T-cell (primary cell): ENCODE measurements at regions of chr17 and their contacts with region 1.

Region 1: GRCh38 chr17:74776044-74776977 is at the start of gene NAT9:
- DNase-seq: peak; percentile 93 to 100 (median 97)
- ATAC-seq: peak; percentile 77 to 87 (median 82)
- H3K4me3 ChIP-seq: peak within 1 kb of the TSS; percentile 70 to 75
- H3K4me3 Mint-ChIP-seq: peak within 1 kb of the TSS; percentile 96 to 99 (median 98)
- H3K27ac ChIP-seq: peak within 1 kb of the TSS; percentile 30
- H3K27ac Mint-ChIP-seq: peak within 1 kb of the TSS; percentile 97
- H3K4me1 ChIP-seq: peaks cover 25 to 70% of the 10 kb centered on the region in 2 experiments
- H3K4me1 Mint-ChIP-seq: peaks cover 50 to 72% (median 66%) of the 10 kb centered on the region in 3 donors
- H3K27me3 ChIP-seq: no peaks in the 10 kb centered on the region
- H3K27me3 Mint-ChIP-seq: no peaks in the 10 kb centered on the region
- total RNA-seq, gene NAT9: 37.2 to 74.4 (median 71.9) TPM

Region 2: DNA sequence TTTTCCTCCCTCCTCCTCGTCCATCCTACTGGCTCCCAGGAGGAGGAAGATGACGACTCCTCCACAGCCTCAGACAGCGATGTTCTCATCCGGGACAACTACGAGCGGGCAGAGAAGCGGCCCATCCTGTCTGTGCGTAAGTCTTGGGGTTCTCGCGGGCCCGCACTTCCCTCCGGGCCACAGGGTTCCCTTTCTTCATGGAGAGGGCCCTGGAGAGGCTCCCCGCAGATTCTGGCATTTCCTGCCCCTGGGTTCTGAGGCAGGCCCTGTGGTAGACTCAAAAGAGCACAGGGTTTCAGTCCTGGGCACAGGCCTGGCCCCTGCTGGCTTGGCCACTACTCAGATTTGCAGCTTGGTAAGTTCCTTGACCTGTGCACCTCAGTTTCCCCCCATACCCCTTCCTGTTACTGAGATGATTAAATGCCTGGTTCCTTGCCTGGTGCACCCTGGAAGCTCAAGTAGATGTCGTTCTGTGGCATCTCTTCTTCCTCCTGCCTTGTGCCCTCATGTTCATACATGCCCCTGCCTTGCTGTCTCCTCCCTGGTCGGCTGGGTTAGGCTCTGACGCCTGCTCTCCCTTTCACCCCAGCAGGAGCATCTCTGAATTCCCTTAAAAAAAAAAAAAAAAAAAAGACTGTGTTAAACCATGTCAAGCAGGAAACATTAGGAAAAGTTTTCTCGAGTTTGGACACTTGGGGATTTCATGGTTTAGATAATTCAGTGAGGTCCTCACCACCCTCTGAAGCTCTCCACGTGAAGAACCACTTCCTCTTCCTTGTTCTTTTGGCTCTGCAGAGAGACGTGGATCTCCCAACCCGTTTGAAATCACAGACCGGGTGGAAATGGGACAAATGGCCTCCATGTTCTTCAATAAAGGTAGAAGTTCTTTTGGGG is 14.1 kb after region 1 on chr17:
- CTCF ChIA-PET with region 1: interaction called in 1 of 2 experiments, 11 read pairs
- POLR2A ChIA-PET with region 1: no interaction called
- DNase-seq: peak in 1 of 35 experiments; percentile 23
- ATAC-seq: peak; percentile 35 to 54 (median 40)
- H3K4me3 ChIP-seq: no peak overlapping the region
- H3K4me3 Mint-ChIP-seq: peak overlapping the region in 2 of 3 donors; percentile 13 to 65
- H3K27ac ChIP-seq: no peak overlapping the region
- H3K27ac Mint-ChIP-seq: peak overlapping the region; percentile 81 to 84
- H3K4me1 ChIP-seq: peaks cover 24 to 40% of the 10 kb centered on the region in 2 experiments
- H3K4me1 Mint-ChIP-seq: peaks cover 31 to 44% (median 32%) of the 10 kb centered on the region in 3 donors
- H3K27me3 ChIP-seq: no peaks in the 10 kb centered on the region
- H3K27me3 Mint-ChIP-seq: no peaks in the 10 kb centered on the region

Region 3: DNA sequence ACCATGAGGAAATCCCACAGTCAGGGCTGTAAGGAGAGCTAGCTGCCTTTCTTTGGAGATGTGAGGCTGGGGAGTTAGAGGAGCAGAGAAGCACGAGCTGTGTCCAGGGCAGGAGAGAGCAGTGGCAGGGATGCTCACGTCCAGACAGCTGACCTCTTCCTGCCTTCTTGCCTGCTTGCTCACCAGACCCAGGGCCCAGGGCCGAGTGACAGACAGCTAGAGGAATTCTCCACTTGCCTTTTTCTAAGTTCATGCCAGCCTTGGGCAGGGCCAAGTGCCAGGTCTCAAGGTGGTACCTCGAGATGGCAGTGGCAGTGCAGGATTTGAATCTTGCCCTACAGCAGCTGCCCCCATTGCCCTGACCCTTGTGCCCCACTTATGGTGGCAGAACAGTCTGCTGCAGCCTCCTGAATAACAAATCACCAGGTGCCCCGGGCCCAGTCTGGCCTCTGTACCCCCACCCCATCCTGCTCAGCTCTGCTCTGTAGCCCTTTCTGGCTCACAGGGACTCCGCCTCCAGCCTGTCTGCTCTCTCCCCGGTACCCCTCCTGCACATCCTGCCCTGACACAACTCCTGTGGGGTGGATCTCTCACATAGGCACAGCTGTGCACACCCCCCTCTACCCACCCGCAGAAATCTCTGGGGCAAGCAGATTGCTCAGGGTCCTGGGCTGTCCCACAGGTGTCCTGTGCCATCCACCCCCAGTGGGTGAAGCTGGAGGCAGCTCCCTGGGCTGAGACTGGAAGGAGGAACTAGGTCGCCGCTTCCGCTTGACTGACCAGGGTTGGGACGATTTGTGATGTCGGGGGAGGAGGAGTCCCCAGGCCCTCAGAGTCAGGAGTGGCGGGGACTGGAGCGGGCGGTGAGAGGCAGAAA is 57.4 kb after region 1 on chr17:
- CTCF ChIA-PET with region 1: no interaction called
- POLR2A ChIA-PET with region 1: no interaction called
- DNase-seq: peak in 1 of 35 experiments; percentile 27
- ATAC-seq: no peak
- H3K4me3 ChIP-seq: no peak overlapping the region
- H3K4me3 Mint-ChIP-seq: no peak overlapping the region
- H3K27ac ChIP-seq: no peak overlapping the region
- H3K27ac Mint-ChIP-seq: no peak overlapping the region
- H3K4me1 ChIP-seq: no peaks in the 10 kb centered on the region
- H3K4me1 Mint-ChIP-seq: no peaks in the 10 kb centered on the region
- H3K27me3 ChIP-seq: no peaks in the 10 kb centered on the region
- H3K27me3 Mint-ChIP-seq: no peaks in the 10 kb centered on the region

Region 4: GRCh38 chr17:74857191-74857590 is 80.9 kb after region 1 on chr17:
- CTCF ChIA-PET with region 1: interaction called, 3 to 14 read pairs
- POLR2A ChIA-PET with region 1: no interaction called
- DNase-seq: no peak
- ATAC-seq: no peak
- H3K4me3 ChIP-seq: no peak overlapping the region
- H3K4me3 Mint-ChIP-seq: no peak overlapping the region
- H3K27ac ChIP-seq: no peak overlapping the region
- H3K27ac Mint-ChIP-seq: no peak overlapping the region
- H3K4me1 ChIP-seq: peaks cover 11 to 40% of the 10 kb centered on the region in 2 experiments
- H3K4me1 Mint-ChIP-seq: peaks cover 23 to 30% (median 27%) of the 10 kb centered on the region in 3 donors
- H3K27me3 ChIP-seq: peaks cover 11 to 84% of the 10 kb centered on the region in 2 experiments
- H3K27me3 Mint-ChIP-seq: peaks cover 52 to 73% of the 10 kb centered on the region in 2 donors

Region 5: GRCh38 chr17:74873038-74873873 is 96.9 kb after region 1 on chr17:
- CTCF ChIA-PET with region 1: interaction called, 3 to 10 read pairs
- POLR2A ChIA-PET with region 1: interaction called, 3 to 4 read pairs
- DNase-seq: peak; percentile 96 to 100 (median 99)
- ATAC-seq: peak; percentile 93 to 94 (median 94)
- H3K4me3 ChIP-seq: peak overlapping the region; percentile 76 to 91
- H3K4me3 Mint-ChIP-seq: peak overlapping the region; percentile 80 to 92 (median 88)
- H3K27ac ChIP-seq: peak overlapping the region; percentile 89
- H3K27ac Mint-ChIP-seq: peak overlapping the region; percentile 95 to 97
- H3K4me1 ChIP-seq: peaks cover 4 to 21% of the 10 kb centered on the region in 2 experiments
- H3K4me1 Mint-ChIP-seq: peaks cover 16 to 30% (median 23%) of the 10 kb centered on the region in 3 donors
- H3K27me3 ChIP-seq: peaks cover 0 to 5% of the 10 kb centered on the region in 2 experiments
- H3K27me3 Mint-ChIP-seq: no peaks in the 10 kb centered on the region